GM10248 (cell line): ENCODE measurements at regions of chr19 and their contacts with region 1.

Region 1: GRCh38 chr19:55653758-55654539 is 886 bp upstream of the U2AF2 start:
- DNase-seq: peak; percentile 92
- CTCF ChIP-seq: peak; percentile 100

Region 2: DNA sequence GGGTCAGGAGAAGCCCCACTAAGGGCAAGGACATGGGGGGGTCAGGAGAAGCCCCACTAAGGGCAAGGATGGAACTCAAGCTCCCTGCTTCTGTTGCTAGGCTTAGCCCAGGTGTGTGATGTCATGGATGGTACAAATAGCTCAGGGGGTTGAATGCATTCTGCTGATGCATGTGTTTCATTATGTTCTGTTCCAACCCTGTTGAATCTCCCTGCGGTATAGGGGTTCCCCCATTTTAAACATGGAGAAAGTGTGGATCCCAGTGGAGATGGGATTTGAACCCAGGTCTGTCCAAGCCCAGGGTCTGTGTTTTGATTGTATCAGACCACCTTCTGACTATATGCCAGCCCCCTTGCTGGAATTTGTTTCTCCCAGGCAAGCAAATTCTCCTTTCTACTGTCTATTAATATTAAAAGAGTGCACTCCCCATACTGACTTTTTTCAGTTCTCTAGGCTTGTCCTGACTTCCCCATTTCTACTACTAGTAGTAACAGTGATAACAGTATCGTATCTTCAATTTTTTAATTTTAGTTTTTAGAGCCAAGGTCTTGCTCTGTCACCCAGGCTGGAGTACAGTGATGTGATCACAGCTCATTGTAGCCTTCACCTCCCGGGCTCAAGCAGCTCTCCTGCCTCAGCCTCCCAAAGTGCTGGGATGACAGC is 41.8 kb before region 1 on chr19:
- CTCF ChIA-PET with region 1: no interaction called
- POLR2A ChIA-PET with region 1: no interaction called
- DNase-seq: no peak
- CTCF ChIP-seq: no peak

Region 3: GRCh38 chr19:55624109-55625003 is 29.6 kb before region 1 on chr19 and contains the start of gene ZNF784:
- CTCF ChIA-PET with region 1: interaction called, 6 read pairs
- POLR2A ChIA-PET with region 1: interaction called, 10 read pairs
- DNase-seq: peak; percentile 94
- CTCF ChIP-seq: no peak

Region 4: GRCh38 chr19:55643348-55644176 is 10.4 kb before region 1 on chr19 and contains the start of gene ZNF581:
- CTCF ChIA-PET with region 1: interaction called, 84 read pairs
- POLR2A ChIA-PET with region 1: interaction called, 7 read pairs
- DNase-seq: peak; percentile 80
- CTCF ChIP-seq: no peak

Region 5: DNA sequence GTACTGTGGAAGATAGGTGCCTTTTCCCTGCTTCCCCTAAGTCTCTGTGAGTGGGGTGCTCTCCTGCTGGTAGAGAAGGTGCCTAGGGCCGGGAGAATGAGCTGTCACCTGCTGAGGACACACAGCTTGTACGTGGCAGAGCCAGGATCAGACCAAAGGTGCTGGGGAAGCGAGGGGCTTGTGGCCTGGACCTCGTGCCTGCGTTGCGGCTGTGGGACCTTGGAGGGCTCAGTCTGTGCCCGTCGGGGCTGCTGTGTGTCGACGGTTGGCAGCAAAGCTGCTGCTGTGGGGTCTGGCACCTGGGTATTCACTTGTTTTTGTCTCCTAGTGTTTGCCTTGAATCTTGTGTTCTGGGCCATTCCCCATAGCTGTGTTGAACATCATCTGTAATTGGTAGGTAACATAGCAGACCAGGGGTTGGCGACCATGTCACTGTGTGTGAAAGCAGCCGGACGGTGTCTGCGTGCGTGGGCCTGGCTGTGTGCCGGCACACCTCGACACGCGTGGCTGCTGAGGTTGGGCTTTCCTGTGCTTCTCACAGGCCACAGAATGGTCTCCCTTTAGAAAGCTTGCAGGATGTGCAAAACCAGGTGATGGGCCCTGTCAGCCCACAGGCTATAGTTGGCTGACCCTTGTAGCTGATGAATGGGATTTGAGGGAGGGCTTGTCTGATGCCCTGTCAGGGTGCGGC is 10.0 kb after region 1 on chr19:
- CTCF ChIA-PET with region 1: interaction called, 14 read pairs
- POLR2A ChIA-PET with region 1: interaction called, 6 read pairs
- DNase-seq: no peak
- CTCF ChIP-seq: no peak

Region 6: GRCh38 chr19:55674841-55675660 is 21.1 kb after region 1 on chr19 and contains the start of gene EPN1:
- CTCF ChIA-PET with region 1: interaction called, 15 read pairs
- POLR2A ChIA-PET with region 1: interaction called, 7 read pairs
- DNase-seq: peak; percentile 99
- CTCF ChIP-seq: no peak